RWPE1 (cell line): ENCODE measurements at regions of chr4 and their contacts with region 1.

Region 1: GRCh38 chr4:92988301-92988700 is 684.5 kb downstream of the GRID2 start:
- DNase-seq: no peak
- H3K27ac ChIP-seq: no peak overlapping the region
- CTCF ChIP-seq: no peak

Region 2: GRCh38 chr4:93042746-93043145 is 54.4 kb after region 1 on chr4:
- CTCF ChIA-PET with region 1: no interaction called
- POLR2A ChIA-PET with region 1: no interaction called
- DNase-seq: no peak
- H3K27ac ChIP-seq: no peak overlapping the region
- CTCF ChIP-seq: no peak

Region 3: GRCh38 chr4:94701631-94702300 is 1713.5 kb after region 1 on chr4:
- CTCF ChIA-PET with region 1: no interaction called
- POLR2A ChIA-PET with region 1: interaction called, 11 read pairs
- DNase-seq: no peak
- H3K27ac ChIP-seq: no peak overlapping the region
- CTCF ChIP-seq: no peak